OCI-LY7 (cell line): ENCODE measurements at regions of chr2 and their contacts with region 1.

Region 1: GRCh38 chr2:88296247-88296646 is 126.1 kb downstream of the THNSL2 start:
- DNase-seq: no peak
- H3K4me3 ChIP-seq: no peak overlapping the region
- H3K27ac ChIP-seq: no peak overlapping the region
- H3K4me1 ChIP-seq: no peaks in the 10 kb centered on the region
- CTCF ChIP-seq: no peak

Region 2: GRCh38 chr2:88281302-88282217 is 14.7 kb before region 1 on chr2:
- CTCF ChIA-PET with region 1: no interaction called
- POLR2A ChIA-PET with region 1: no interaction called
- intact Hi-C with region 1: loop called (anchors 2 kb)
- DNase-seq: no peak
- H3K4me3 ChIP-seq: no peak overlapping the region
- H3K27ac ChIP-seq: no peak overlapping the region
- H3K4me1 ChIP-seq: no peaks in the 10 kb centered on the region
- CTCF ChIP-seq: no peak